ENCODE measurements at regions of chr10 and their contacts with region 1.

Region 1: DNA sequence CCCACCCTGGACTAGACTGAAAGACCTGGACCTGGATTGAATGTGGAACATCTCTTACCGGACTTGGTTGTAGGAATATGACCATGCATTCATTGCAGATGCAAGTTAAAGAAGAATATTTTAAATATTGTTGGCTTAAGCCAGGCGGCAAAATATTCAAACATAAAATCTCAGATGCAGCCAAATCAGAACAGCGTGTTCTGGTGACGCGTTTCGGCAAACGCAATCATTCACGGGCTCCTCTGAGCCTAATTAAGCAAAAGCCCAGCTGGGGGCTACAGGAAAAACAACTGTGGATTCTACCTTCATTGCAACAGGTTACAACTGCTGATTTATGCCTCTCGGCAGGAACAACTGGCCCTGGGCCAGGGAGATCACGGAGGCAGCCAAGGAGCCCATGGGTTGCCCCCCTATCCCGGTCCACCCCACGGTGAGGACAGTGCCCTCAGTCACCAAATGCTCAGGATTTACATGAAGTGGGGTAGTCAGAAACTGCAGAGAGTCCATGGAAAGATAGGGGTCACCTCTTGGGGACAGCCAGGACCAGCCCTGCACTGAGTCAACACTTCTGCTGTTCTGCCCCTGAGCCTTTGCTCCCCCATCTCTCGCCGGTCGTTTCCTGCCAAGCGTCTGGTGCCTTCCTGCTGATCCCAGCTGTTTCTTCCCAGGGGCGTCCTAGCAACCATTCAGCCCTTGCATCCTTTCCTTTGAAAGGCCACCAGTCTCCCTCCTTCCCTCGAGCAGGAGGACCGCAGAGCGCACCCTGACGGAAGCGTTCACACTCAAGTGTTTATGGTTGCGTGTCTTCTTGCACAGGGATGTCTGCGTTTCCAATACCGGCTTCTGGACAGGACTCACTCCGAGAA is 64.4 kb upstream of the SFMBT2 start:
- DNase-seq: peak in 1 of 2 donors; percentile 33
- ATAC-seq: peak in 7 of 8 donors; percentile 43 to 79 (median 72)
- H3K4me3 ChIP-seq: peak overlapping the region in 1 of 10 donors; percentile 11
- H3K27ac ChIP-seq: no peak overlapping the region
- H3K4me1 ChIP-seq: peaks cover 0 to 36% (median 11%) of the 10 kb centered on the region in 9 donors
- H3K27me3 ChIP-seq: peaks cover 0 to 5% (median 0%) of the 10 kb centered on the region in 7 donors
- CTCF ChIP-seq: no peak

Region 2: DNA sequence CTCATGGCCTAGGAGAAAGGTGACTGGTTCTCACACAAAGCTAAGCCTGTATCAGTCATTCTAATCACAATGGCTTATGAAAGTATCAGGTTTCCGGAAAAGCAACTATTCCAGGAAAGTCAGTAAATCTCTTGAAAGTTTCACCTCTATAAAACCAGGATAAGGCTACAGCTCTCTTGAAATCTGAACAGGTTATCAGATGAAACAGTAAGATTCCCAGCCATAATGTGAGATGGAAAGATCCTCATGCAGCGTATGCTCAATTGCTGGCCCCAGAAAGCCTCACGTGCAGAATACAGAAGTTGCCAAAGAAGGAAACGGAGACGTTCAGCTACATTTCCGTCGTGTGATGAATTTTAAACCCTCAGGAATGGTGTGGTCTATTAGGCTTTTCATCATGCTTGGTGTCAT is 1182.5 kb before region 1 on chr10:
- intact Hi-C with region 1: loop called in 1 of 10 experiments (anchors 5 kb)
- DNase-seq: no peak
- ATAC-seq: no peak
- H3K4me3 ChIP-seq: no peak overlapping the region
- H3K27ac ChIP-seq: no peak overlapping the region
- H3K4me1 ChIP-seq: peaks cover 0 to 35% (median 0%) of the 10 kb centered on the region in 9 donors
- H3K27me3 ChIP-seq: no peaks in the 10 kb centered on the region
- CTCF ChIP-seq: no peak

Region 3: DNA sequence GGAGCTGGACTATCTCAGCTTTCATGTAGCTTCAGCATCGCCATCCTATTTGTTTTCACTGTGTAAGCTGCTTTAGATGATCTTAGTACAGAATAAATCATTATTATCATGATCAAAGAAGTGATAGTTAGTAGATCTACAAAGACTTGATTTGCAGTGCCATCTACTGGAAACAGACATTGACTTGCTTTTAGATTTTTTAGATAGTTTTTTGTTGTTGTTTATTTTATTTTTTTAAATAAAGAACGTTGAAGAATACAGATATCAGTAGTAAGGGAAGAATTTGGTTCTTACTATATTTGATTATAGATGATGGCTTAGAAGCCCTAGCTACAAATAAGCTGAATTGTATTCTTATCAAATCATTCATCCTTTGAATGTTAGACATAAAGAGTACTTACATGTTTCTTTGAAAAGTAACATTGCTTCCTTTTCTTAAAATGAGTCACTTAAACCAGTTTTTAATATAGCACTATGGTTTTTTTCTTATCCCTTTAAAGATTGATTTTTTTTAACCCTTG is 58.1 kb before region 1 on chr10:
- intact Hi-C with region 1: no loop called
- DNase-seq: no peak
- ATAC-seq: no peak
- H3K4me3 ChIP-seq: no peak overlapping the region
- H3K27ac ChIP-seq: no peak overlapping the region
- H3K4me1 ChIP-seq: peaks cover 3 to 15% (median 8%) of the 10 kb centered on the region in 9 donors
- H3K27me3 ChIP-seq: peaks cover 0 to 22% (median 18%) of the 10 kb centered on the region in 7 donors
- CTCF ChIP-seq: peak; percentile 21 to 82 (median 64)

Measured in heart right ventricle (tissue), 16 donors.